ENCODE measurements at regions of chr11 and their contacts with region 1.

Region 1: GRCh38 chr11:117907251-117907981 is 21.8 kb downstream of the TMPRSS13 start:
- DNase-seq: peak; percentile 78
- ATAC-seq: peak; percentile 95
- H3K4me3 Mint-ChIP-seq: peak overlapping the region; percentile 22
- H3K27ac Mint-ChIP-seq: peak overlapping the region; percentile 70
- H3K4me1 Mint-ChIP-seq: peaks cover 20% of the 10 kb centered on the region
- H3K27me3 Mint-ChIP-seq: no peaks in the 10 kb centered on the region

Region 2: DNA sequence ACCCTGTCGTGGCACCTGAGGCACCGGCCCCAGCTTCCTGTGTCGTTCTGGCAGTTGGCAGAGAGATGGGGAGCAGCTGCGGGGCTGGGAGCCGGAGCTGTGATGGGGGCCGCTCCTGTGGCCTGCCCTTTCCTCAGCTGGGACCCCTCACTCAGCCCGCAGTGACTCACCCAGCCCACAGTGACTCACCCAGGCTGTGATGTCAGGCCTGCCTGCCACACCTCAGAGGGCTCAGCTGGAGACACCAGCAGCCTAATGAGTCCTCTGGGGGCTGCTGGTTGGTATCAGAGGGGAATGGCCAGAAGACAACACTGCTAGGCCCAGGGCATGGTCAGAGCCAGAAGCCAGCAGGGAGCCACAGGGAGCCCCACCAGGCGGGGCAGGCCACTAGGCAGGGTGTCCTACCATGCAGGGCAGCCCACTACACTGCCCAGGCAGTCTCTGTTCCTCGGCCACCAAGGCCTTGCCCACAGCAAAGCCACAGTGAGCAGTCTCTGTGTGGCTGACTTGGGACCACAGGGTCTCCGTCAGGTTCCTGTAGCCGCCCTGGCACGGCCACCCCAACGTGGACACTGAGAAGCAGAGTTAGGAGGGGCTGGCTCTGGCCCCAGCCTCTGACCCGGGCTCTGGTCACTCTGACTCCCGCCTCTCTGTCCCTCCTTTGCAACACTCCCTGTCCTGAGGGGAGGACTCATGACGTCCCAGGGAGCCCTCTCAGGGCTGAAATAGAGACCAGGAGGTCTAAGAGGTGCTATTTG is 78.6 kb before region 1 on chr11:
- CTCF ChIA-PET with region 1: interaction called, 22 read pairs
- POLR2A ChIA-PET with region 1: no interaction called
- DNase-seq: peak; percentile 92
- ATAC-seq: peak; percentile 88
- H3K4me3 Mint-ChIP-seq: peak overlapping the region; percentile 48
- H3K27ac Mint-ChIP-seq: peak overlapping the region; percentile 90
- H3K4me1 Mint-ChIP-seq: peaks cover 83% of the 10 kb centered on the region
- H3K27me3 Mint-ChIP-seq: no peaks in the 10 kb centered on the region

Region 3: GRCh38 chr11:117870103-117870952 is 37.1 kb before region 1 on chr11:
- CTCF ChIA-PET with region 1: no interaction called
- POLR2A ChIA-PET with region 1: no interaction called
- DNase-seq: no peak
- ATAC-seq: no peak
- H3K4me3 Mint-ChIP-seq: no peak overlapping the region
- H3K27ac Mint-ChIP-seq: no peak overlapping the region
- H3K4me1 Mint-ChIP-seq: peaks cover 33% of the 10 kb centered on the region
- H3K27me3 Mint-ChIP-seq: peaks cover 27% of the 10 kb centered on the region